Sigmoid colon (tissue), 7 donors: ENCODE measurements at regions of chr16 and their contacts with region 1.

Region 1: GRCh38 chr16:27367461-27368357 is 34.3 kb upstream of the IL21R start:
- DNase-seq: peak; percentile 92
- H3K4me3 ChIP-seq: peak overlapping the region in 2 of 4 donors; percentile 18 to 33
- H3K27ac ChIP-seq: peak overlapping the region; percentile 20 to 68 (median 38)
- H3K4me1 ChIP-seq: peaks cover 0 to 27% (median 19%) of the 10 kb centered on the region in 4 donors
- H3K27me3 ChIP-seq: no peaks in the 10 kb centered on the region
- CTCF ChIP-seq: peak; percentile 47 to 87 (median 73)
- EP300 ChIP-seq: no peak
- POLR2A ChIP-seq: no peak

Region 2: GRCh38 chr16:27179500-27180072 is 188.1 kb before region 1 on chr16:
- intact Hi-C with region 1: loop called (anchors 1 kb)
- DNase-seq: peak; percentile 93
- H3K4me3 ChIP-seq: no peak overlapping the region
- H3K27ac ChIP-seq: no peak overlapping the region
- H3K4me1 ChIP-seq: no peaks in the 10 kb centered on the region
- H3K27me3 ChIP-seq: no peaks in the 10 kb centered on the region
- CTCF ChIP-seq: peak; percentile 86 to 97 (median 93)
- EP300 ChIP-seq: no peak
- POLR2A ChIP-seq: no peak

Region 3: DNA sequence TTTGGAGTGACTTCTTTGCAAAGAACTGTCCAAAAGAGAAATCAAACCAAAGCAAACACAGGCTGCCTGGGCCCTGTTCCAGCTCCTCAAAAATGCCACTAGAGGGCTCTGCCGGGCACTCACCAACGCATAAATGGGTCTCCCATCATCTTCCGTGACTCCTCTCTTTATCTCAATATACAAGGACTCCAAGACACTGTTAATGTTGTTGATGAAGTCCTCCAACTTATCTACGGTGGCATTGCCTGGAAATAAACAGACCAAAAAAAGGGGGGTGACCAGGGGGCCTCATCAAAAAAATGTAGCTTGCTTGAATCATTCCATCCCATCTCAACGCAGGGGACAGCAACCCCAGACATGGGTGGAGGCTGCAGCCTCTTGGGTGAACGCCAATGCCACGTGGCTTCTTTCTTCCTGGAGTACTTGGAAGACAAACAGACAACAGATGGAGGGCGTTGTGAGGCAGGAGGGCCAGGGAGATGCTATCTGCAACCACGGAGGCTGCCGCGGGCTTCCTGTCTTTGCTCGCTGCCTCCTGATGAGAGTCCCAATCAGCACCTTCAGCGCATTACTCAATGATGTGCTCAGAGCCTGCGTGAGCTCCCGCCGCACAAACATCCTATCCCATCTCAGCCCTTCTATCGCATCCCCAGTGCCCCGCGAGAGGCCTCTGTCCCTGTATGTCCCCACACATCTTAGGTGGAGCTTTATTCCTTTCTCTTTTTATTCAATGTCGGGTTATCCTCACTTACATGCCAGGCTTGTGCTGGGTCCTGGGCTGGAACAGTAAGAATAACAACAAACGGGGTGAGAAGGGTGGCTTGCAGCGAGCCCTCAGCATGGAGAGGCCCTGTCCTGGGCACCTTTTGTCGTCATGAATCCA is 132.4 kb before region 1 on chr16:
- intact Hi-C with region 1: loop called (anchors 1 kb)
- DNase-seq: peak; percentile 95
- H3K4me3 ChIP-seq: peak overlapping the region in 3 of 4 donors; percentile 18 to 23 (median 23)
- H3K27ac ChIP-seq: peak overlapping the region; percentile 68 to 78 (median 72)
- H3K4me1 ChIP-seq: peaks cover 0 to 27% (median 22%) of the 10 kb centered on the region in 4 donors
- H3K27me3 ChIP-seq: no peaks in the 10 kb centered on the region
- CTCF ChIP-seq: peak; percentile 60 to 80 (median 70)
- EP300 ChIP-seq: no peak
- POLR2A ChIP-seq: no peak

Region 4: GRCh38 chr16:27286451-27286850 is 81.3 kb before region 1 on chr16:
- intact Hi-C with region 1: no loop called
- DNase-seq: no peak
- H3K4me3 ChIP-seq: no peak overlapping the region
- H3K27ac ChIP-seq: peak overlapping the region in 1 of 4 donors; percentile 48
- H3K4me1 ChIP-seq: no peaks in the 10 kb centered on the region
- H3K27me3 ChIP-seq: no peaks in the 10 kb centered on the region
- CTCF ChIP-seq: no peak
- EP300 ChIP-seq: no peak
- POLR2A ChIP-seq: no peak

Region 5: GRCh38 chr16:27321011-27321915 is 46.4 kb before region 1 on chr16:
- intact Hi-C with region 1: no loop called
- DNase-seq: peak; percentile 57
- H3K4me3 ChIP-seq: no peak overlapping the region
- H3K27ac ChIP-seq: peak overlapping the region; percentile 96 to 99 (median 99)
- H3K4me1 ChIP-seq: peaks cover 0 to 100% (median 93%) of the 10 kb centered on the region in 4 donors
- H3K27me3 ChIP-seq: no peaks in the 10 kb centered on the region
- CTCF ChIP-seq: no peak
- EP300 ChIP-seq: no peak
- POLR2A ChIP-seq: no peak

Region 6: DNA sequence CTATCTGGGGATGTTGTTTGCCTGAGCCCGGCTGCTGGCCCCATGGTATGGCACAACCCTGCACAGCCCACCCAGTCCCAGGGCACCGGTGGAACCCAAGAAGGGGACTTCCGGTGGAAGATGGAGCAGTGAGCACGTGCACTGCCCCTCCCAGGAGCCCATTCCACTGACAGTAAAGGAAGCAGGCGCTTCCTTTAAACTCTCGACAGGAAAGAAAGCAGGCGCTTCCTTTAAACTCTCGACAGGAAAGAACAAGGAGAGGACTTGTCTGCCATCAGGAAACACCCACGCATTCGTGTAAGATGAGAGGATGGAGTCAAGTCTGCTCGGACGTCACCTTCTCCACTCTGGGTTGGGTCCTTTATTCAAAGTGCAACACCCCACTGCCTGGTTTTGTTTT is 88.0 kb after region 1 on chr16:
- intact Hi-C with region 1: loop called (anchors 5 kb)
- DNase-seq: no peak
- H3K4me3 ChIP-seq: no peak overlapping the region
- H3K27ac ChIP-seq: no peak overlapping the region
- H3K4me1 ChIP-seq: no peaks in the 10 kb centered on the region
- H3K27me3 ChIP-seq: peaks cover 0 to 3% (median 1%) of the 10 kb centered on the region in 3 donors
- CTCF ChIP-seq: no peak
- EP300 ChIP-seq: no peak
- POLR2A ChIP-seq: no peak